ENCODE measurements at regions of chr3 and their contacts with region 1.

Region 1: DNA sequence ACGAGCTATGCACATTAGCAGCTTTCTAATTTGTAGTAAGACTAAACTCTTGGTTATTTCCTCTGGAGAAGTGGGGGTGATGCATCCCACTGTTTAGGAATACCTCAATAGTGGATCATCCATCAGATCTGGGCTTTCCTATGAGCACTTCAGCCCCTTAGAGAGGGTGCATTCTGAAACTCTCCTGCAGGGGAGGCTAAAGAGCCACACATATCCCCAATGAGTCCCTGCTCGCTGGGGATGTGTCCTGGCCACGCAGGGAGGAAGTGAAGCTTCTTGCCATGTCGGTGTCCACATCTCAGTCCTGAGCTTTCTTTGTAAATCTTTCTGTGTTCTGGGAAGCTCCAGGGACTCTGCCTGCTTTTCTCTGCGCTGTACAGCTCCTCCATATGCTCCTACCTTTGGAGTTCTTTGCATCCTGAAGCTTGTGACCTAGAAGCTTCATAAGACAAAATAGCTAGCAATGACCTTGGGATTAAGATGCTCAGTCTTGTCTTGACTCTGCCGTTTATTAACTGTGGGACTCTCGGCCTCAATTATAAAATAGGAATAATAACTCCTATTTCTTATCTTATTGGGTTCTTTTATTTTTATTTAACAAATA is 28.3 kb upstream of the MASP1 start:
- DNase-seq: peak; percentile 56
- CTCF ChIP-seq: peak; percentile 80

Region 2: GRCh38 chr3:187291512-187292132 is 28.2 kb before region 1 on chr3 and contains the start of gene MASP1:
- CTCF ChIA-PET with region 1: interaction called, 11 read pairs
- POLR2A ChIA-PET with region 1: no interaction called
- DNase-seq: no peak
- CTCF ChIP-seq: no peak

Region 3: DNA sequence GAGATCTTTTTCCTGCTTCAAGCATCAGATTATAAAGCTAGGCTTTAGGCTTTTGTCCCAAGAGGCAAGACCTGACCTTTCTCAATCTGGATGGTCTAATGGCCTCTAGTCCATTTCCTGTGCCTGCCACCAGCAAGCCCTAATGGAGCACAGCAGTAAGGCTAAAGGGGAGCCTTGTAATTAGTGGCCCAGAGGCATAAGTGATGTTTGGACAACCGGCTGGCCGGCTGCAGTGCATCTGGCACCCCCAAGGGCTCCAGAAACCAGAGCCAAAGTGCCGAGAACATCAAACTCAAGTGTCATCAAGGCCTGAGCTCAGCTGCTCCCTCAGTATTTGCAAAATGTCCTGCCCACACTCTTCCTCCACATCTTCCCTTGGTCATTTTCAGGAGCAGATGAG is 16.5 kb after region 1 on chr3:
- CTCF ChIA-PET with region 1: interaction called, 74 read pairs
- POLR2A ChIA-PET with region 1: no interaction called
- DNase-seq: no peak
- CTCF ChIP-seq: no peak

Region 4: DNA sequence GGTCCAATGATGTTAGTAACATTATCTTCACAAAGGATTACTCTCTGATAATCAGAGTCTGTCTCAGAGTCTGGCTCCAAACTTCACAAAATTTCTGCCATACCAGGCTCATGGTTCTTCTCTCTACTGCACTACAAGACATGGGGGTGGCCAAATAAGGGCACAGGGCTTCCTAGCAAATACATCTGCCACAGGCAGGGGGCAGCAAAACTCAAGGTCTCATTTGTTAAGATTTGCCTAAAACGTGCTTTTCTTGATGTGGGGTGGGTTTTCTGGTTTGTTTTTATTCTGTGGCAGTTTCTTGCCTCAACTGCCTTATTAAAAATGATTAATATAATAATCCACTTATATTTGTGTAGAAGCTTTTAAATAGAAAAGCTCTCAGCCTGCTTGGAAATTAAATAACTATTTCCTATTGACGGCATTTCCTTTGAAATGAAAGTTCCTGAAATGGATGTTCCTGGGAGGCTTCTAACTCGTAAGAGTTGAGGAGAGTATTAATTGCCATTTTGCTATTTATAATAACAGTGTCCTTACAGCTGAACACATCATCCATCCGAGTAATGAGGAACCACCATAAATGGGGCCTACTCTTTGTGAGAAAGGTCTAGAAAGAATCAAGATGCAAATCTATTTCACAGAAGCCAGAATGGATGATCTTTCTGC is 296.6 kb after region 1 on chr3:
- CTCF ChIA-PET with region 1: interaction called, 38 read pairs
- POLR2A ChIA-PET with region 1: no interaction called
- DNase-seq: peak; percentile 38
- CTCF ChIP-seq: peak; percentile 68

Region 5: GRCh38 chr3:187669675-187670504 is 350.1 kb after region 1 on chr3 and contains the start of gene SST:
- CTCF ChIA-PET with region 1: interaction called, 653 read pairs
- POLR2A ChIA-PET with region 1: no interaction called
- DNase-seq: no peak
- CTCF ChIP-seq: no peak

Region 6: DNA sequence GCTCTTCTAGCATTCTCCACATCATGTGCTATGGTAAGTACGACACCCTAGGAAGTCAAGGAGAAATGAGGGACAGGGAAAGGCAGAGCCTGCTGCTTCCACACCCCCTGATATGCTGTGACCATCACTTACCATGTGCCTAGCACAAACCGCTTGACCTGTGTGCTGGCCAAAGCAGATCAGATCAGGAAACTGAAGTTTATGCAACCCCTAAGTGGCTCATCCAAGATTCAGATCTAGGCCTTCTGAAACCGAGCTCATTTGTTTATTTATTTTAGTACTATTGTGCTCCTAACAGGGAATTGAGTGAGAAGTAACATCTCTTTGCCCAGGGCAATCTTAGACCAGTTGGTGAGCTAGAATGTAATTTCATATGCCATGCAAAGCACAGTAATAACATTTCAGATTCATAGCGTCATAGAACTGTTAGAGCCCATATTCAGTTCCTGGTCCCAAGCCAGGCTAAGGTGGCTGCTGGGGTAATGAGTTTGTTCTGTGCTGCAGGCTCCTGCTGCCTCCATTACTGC is 382.8 kb after region 1 on chr3 and contains the start of gene RTP2:
- CTCF ChIA-PET with region 1: interaction called, 47 read pairs
- POLR2A ChIA-PET with region 1: no interaction called
- DNase-seq: no peak
- CTCF ChIP-seq: no peak